Activated T-helper 1 cell treated with anti-CD3 and anti-CD28 coated beads, Interleukin-12 subunit alpha, Interleukin-12 subunit beta, Interleukin-2, Interleukin-4 antibody, amounts not matched to agents 30 ng/mL and 10 ng/mL and 1 ng/mL, durations not matched to agents 14 hours and 24 hours and 36 hours (primary cell): ENCODE measurements at regions of chr5 and their contacts with region 1.

Region 1: DNA sequence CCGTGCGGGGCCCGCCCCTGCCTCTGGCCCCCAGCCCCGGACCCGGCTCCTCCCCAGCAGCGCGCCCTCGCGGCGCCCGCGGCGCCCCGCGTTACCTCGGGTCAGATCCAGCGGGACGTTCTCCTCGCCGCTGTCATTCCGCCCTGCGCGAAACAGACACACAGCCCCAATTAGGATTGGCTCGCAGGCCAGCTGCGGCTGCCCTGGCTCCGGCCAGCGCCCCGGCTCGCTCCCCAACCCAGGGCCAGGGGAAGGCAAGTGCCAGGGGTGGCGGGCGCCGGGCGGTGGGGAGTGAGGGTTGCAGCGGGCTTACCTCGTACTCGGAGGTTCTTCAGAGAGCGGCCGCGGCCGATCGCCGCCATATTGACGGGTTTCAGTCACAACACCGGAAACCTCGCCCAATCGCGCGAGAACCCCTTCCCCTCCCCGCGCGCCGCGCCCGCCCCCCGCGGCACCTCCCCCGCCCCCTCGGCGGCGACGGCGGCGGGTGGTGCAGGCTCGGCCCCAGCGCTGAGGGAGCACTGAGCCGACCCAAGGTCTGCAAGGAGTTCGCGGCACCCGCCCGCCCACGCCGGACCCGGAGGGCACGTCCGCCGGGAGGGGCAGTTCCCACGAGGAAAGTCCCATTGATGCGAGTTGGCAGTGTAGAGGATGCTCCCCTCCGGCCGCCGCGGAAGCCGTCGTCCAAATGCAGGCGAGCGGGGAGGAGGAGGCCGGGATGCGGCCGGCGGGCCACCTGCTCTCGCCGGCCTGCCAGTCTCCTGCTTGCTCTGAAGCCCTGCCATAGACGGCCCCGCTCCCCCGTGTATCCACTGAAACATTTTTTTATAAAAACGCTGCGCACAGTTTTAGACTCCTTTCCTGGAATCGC is at the start of gene RICTOR:
- DNase-seq: peak; percentile 88
- H3K4me3 Mint-ChIP-seq: peak within 1 kb of the TSS; percentile 94
- H3K27ac Mint-ChIP-seq: peak within 1 kb of the TSS; percentile 95
- H3K4me1 Mint-ChIP-seq: peaks cover 52% of the 10 kb centered on the region
- H3K27me3 Mint-ChIP-seq: peaks cover 11% of the 10 kb centered on the region
- total RNA-seq, gene RICTOR: 30.1 and 33.9 TPM in 2 replicates

Region 2: GRCh38 chr5:37738057-37738691 is 1336.1 kb before region 1 on chr5:
- intact Hi-C with region 1: loop called (anchors 2 kb)
- DNase-seq: peak; percentile 4
- H3K4me3 Mint-ChIP-seq: peak overlapping the region; percentile 51
- H3K27ac Mint-ChIP-seq: peak overlapping the region; percentile 81
- H3K4me1 Mint-ChIP-seq: peaks cover 35% of the 10 kb centered on the region
- H3K27me3 Mint-ChIP-seq: no peaks in the 10 kb centered on the region

Region 3: DNA sequence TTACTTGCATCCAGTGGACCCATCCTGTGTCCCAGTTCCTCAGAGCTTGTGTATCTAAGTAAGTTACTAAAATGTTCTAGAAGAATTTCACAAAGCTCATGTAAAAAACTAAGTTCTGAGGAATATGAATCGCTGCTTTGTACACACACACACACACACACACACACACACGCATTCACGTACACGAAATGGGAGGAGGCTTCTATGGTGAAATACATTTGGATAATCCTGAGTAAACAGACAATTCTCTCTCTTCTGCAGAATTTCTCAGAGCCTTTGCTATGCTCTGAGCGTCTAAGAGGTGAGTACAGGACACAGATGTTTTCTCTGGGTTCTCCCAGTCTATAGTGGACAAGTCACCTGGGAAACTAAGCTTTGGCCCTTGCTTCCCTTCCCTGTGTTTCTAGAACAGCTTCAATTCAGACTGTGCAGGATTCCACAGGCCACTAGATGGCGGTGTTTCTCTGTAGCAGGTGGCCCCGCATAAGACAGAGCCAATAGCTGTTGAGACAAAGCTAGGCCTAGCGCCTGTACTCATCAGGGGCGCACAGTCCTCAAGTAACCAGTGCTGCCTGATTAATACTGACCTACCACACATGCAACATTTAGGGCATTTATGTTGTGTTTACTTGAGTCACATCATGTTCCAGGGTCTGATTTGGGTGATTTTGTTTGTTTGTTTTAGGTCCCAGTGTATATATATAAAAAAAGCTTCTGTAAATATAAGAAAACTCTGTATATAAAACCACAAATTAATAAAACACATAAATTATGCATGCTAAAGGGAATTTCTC is 632.6 kb before region 1 on chr5:
- intact Hi-C with region 1: no loop called
- DNase-seq: peak; percentile 70
- H3K4me3 Mint-ChIP-seq: no peak overlapping the region
- H3K27ac Mint-ChIP-seq: no peak overlapping the region
- H3K4me1 Mint-ChIP-seq: no peaks in the 10 kb centered on the region
- H3K27me3 Mint-ChIP-seq: peaks cover 45% of the 10 kb centered on the region

Region 4: DNA sequence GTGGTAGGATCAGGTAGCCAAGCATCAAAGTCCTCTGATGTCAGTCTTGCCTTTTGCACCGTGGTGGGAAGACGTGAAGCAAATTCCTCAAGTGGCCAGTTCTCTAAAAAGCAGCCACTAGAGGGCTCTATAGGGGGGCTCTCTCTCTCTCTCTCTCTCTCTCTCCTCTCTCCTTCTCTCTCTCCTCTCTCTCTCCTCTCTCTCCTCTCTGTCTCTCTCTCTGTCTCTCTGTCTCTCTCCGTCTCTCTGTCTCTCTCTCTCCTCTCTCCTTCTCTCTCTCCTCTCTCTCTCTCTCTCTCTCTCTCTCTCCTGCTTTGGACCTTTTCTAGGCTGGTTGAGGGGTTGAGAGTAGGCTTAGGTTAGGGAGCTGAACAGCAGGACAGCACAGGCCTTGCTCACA is 242.3 kb before region 1 on chr5:
- intact Hi-C with region 1: loop called (anchors 5 kb)
- DNase-seq: no peak
- H3K4me3 Mint-ChIP-seq: no peak overlapping the region
- H3K27ac Mint-ChIP-seq: no peak overlapping the region
- H3K4me1 Mint-ChIP-seq: peaks cover 9% of the 10 kb centered on the region
- H3K27me3 Mint-ChIP-seq: peaks cover 20% of the 10 kb centered on the region

Region 5: DNA sequence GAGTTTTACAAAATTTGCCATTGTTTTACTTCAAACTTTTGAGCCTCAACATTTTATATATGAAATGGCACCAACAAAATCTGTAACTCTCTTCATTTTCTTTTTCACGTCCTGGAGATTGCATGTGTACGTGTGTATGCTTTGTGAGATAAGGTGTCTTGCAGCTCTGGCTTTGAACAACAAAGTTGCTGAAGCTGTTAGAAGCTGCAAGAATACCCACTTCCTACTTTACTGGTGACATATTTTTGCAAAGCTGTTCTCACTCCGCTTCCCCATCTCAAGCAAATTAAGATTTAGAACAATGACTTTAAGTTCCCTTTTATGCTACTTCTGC is 103.3 kb after region 1 on chr5:
- intact Hi-C with region 1: loop called (anchors 5 kb)
- DNase-seq: no peak
- H3K4me3 Mint-ChIP-seq: peak overlapping the region; percentile 78
- H3K27ac Mint-ChIP-seq: peak overlapping the region; percentile 77
- H3K4me1 Mint-ChIP-seq: peaks cover 89% of the 10 kb centered on the region
- H3K27me3 Mint-ChIP-seq: no peaks in the 10 kb centered on the region

Region 6: DNA sequence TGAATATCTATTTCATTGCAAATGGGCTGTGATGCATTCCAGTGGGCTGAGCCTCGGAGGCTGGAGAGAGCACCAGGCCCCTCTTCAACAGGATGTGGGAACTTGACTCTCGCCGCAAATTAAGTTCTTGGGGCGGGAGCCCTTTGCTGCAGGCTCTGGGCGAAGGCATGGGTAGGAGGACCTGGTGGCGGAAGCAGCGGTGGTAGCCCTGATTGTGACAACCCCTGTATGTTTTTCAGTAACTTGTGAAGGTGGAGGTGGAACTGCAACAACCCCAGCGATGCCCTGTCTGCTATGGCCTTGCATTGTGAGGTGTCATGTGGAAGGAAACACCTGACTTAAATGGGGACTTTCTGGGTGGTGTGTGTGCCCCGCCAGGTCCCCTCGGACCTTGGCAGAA is 135.7 kb after region 1 on chr5:
- intact Hi-C with region 1: loop called (anchors 1 kb)
- DNase-seq: peak; percentile 78
- H3K4me3 Mint-ChIP-seq: peak overlapping the region; percentile 67
- H3K27ac Mint-ChIP-seq: peak overlapping the region; percentile 92
- H3K4me1 Mint-ChIP-seq: peaks cover 94% of the 10 kb centered on the region
- H3K27me3 Mint-ChIP-seq: no peaks in the 10 kb centered on the region

Region 7: GRCh38 chr5:40755407-40756365 is 1681.4 kb after region 1 on chr5 and contains the start of gene TTC33:
- intact Hi-C with region 1: loop called (anchors 5 kb)
- DNase-seq: peak; percentile 92
- H3K4me3 Mint-ChIP-seq: no peak within 1 kb of the TSS
- H3K27ac Mint-ChIP-seq: peak within 1 kb of the TSS; percentile 41
- H3K4me1 Mint-ChIP-seq: peaks cover 21% of the 10 kb centered on the region
- H3K27me3 Mint-ChIP-seq: no peaks in the 10 kb centered on the region
- total RNA-seq, gene TTC33: 23.4 and 24.6 TPM in 2 replicates